ENCODE measurements at regions of chr9 and their contacts with region 1.

Region 1: DNA sequence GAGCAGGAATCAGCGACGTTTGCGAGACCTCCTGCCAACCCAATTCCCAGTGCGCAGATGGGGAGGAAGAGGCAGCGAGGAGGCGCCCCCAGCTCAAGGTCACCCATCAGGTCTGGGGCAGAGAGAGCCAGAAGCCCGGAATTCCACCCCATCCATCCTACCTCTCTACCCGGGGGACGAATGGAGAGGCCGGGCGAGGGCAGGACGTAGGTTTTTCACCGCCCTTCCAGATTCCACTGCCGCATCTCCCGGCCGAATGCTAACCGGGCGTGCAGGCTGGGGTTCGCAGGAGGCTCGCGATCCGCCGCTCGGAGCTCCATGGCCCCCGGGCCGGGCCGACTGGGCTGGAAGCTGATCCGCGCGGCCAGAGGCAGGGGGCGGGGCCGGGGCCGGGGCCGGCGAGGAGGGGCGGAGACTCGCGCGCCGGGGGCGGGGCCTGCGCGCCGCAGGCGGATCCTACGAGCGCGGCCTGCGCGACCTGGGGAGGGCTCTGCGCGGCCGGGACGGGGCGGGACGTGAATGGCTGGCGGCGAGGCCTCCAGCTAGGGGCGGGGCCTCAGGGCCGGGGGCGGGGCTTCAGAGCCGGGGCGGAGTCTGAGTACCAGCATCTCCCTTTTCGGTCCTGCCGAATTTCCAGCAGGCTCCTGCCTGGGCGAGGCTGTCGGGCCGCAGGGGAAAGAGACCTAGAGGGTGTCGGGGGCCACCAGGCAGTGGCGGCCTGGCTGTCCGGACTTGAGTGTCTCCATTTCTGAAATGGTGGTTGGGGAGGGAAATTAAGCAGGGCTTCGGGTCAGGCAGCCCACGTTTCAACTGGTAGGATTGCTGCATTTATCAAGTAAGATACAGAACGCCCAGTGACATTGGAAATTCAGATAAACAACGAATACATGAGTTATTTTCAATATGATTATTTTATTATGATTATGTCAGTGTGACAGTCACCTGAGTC is at the start of gene ST6GALNAC4:
- DNase-seq: peak; percentile 90 to 93 (median 91)
- H3K4me3 ChIP-seq: peak within 1 kb of the TSS; percentile 66 to 76
- H3K4me3 Mint-ChIP-seq: peak within 1 kb of the TSS; percentile 78 to 88 (median 84)
- H3K27ac ChIP-seq: peak within 1 kb of the TSS; percentile 52
- H3K27ac Mint-ChIP-seq: peak within 1 kb of the TSS; percentile 63 to 84 (median 79)
- H3K4me1 ChIP-seq: peaks cover 38% of the 10 kb centered on the region
- H3K4me1 Mint-ChIP-seq: peaks cover 12 to 65% (median 39%) of the 10 kb centered on the region in 4 donors
- H3K27me3 ChIP-seq: no peaks in the 10 kb centered on the region
- H3K27me3 Mint-ChIP-seq: no peaks in the 10 kb centered on the region
- total RNA-seq, gene ST6GALNAC4: 35.7 to 38.1 TPM

Region 2: DNA sequence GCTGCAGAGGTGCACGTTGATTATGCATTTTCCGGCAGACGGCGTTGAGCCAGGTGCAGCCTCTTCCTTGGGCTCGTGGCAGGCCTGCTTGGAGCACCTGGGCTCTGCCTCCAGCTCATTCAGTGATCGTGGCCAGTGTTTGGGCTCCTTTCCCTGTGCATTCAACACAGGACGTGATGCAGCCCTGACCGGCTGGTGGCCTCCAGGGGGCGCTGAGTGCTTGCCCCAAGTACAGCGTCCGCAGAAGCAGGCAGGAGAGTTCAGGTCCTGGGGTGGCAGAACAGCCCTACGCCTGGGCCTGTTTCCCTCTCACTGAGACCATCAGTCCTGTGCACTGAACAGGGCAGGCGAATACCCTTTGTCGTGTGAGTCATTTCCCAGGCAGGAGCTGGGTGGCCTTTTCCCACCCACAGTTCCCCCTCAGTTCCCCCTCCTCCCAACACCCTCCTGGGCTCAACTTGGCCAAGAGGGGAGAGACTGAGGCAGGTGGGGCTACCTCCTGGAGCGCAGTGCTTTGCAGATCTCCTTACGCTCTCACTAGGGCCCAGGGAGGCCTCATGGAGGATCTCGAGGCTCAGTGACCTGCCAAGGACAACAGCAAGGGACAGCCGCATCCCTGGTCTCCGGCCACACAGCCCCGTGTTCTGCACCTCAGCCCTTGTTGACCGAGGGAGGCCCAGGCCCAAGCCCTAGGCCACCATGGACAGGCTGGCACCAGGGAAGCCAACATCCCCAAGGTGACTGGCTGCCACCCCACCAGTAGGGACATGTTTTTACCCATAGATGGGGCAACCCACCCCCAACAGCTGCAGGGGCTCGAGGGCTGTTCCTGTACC is 412.8 kb before region 1 on chr9:
- CTCF ChIA-PET with region 1: interaction called, 6 read pairs
- POLR2A ChIA-PET with region 1: no interaction called
- intact Hi-C with region 1: loop called (anchors 5 kb)
- DNase-seq: peak; percentile 74 to 76 (median 75)
- H3K4me3 ChIP-seq: no peak overlapping the region
- H3K4me3 Mint-ChIP-seq: no peak overlapping the region
- H3K27ac ChIP-seq: no peak overlapping the region
- H3K27ac Mint-ChIP-seq: peak overlapping the region in 4 of 7 donors; percentile 12 to 84 (median 70)
- H3K4me1 ChIP-seq: no peaks in the 10 kb centered on the region
- H3K4me1 Mint-ChIP-seq: peaks cover 0 to 5% (median 2%) of the 10 kb centered on the region in 4 donors
- H3K27me3 ChIP-seq: no peaks in the 10 kb centered on the region
- H3K27me3 Mint-ChIP-seq: no peaks in the 10 kb centered on the region

Region 3: DNA sequence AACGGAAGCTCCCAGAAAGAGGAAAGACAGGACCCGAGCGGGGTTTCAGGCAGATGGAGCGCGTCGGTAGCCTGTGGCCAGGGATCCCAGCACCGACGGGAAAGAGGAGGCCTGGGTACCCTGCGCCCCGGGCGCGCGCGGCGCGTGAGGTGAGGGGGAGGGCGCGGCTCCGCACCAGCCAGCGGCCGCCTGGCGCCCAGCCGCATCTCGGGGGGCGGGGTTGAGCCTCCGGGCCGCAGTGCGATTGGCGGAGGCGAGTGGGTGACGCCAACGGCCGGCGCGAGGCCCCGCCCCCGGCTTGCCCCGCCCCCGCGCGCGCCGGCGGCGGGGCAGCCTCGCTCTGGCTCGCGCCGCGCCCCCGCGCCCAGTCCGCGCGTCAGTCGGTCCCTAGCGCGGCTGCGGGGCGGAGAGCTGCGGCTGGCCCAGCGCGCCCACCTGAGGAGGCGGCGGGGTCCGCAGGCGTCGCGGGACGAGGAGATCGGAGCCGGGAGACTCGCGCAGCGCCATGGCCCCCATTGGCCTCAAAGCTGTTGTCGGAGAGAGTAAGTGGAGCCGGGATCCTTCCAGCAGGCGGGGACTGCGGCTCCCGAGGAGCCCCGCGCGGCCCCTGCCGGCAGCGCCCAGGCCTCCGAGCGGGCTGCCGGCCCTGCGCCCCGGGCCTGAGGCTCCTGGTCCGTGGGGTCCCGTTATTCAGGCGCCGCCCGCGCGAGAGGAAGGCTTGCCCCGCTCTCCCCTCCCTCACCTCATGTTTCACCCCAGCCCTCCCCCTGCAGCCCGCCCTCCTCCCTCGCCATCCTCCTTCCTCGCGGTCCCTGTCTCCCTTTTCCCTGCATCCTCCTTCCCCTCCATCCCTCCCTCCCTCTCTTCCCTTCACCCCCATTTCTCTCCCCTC is 304.8 kb before region 1 on chr9 and contains the start of gene STXBP1:
- CTCF ChIA-PET with region 1: interaction called, 6 read pairs
- POLR2A ChIA-PET with region 1: interaction called, 4 read pairs
- intact Hi-C with region 1: loop called (anchors 5 kb)
- DNase-seq: peak; percentile 81 to 88 (median 85)
- H3K4me3 ChIP-seq: peak within 1 kb of the TSS; percentile 54 to 74
- H3K4me3 Mint-ChIP-seq: peak within 1 kb of the TSS; percentile 88 to 98 (median 96)
- H3K27ac ChIP-seq: peak within 1 kb of the TSS; percentile 24
- H3K27ac Mint-ChIP-seq: peak within 1 kb of the TSS; percentile 59 to 93 (median 87)
- H3K4me1 ChIP-seq: peaks cover 32% of the 10 kb centered on the region
- H3K4me1 Mint-ChIP-seq: peaks cover 23 to 45% (median 32%) of the 10 kb centered on the region in 4 donors
- H3K27me3 ChIP-seq: peaks cover 4% of the 10 kb centered on the region
- H3K27me3 Mint-ChIP-seq: peaks cover 5 to 14% of the 10 kb centered on the region in 2 donors
- total RNA-seq, gene STXBP1: 19.9 to 20.9 TPM

Region 4: DNA sequence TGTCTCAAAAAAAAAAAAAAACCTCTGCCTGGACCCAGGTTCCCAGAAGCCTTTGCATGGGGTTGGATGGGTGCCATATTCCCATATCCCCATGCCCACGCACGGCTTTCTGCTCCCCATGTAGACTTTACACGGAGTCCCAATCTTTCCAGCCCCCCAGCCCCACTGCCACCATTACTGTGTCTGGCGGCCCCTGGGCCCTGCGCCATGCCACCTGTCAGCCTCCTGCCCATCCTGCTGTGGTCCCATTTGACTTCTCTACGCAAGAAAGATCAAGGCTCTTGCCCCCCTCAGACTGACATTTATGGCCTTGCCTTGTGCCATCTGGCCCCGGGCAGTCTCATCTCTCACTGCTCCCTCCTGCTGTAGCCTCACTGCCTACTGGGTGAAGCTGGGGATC is 33.0 kb before region 1 on chr9:
- CTCF ChIA-PET with region 1: interaction called, 12 read pairs
- POLR2A ChIA-PET with region 1: interaction called, 3 read pairs
- intact Hi-C with region 1: no loop called
- DNase-seq: no peak
- H3K4me3 ChIP-seq: no peak overlapping the region
- H3K4me3 Mint-ChIP-seq: no peak overlapping the region
- H3K27ac ChIP-seq: no peak overlapping the region
- H3K27ac Mint-ChIP-seq: peak overlapping the region in 5 of 7 donors; percentile 19 to 72 (median 52)
- H3K4me1 ChIP-seq: no peaks in the 10 kb centered on the region
- H3K4me1 Mint-ChIP-seq: peaks cover 0 to 16% (median 9%) of the 10 kb centered on the region in 4 donors
- H3K27me3 ChIP-seq: no peaks in the 10 kb centered on the region
- H3K27me3 Mint-ChIP-seq: no peaks in the 10 kb centered on the region

Region 5: GRCh38 chr9:127905004-127905728 is 11.8 kb before region 1 on chr9:
- CTCF ChIA-PET with region 1: interaction called, 10 read pairs
- POLR2A ChIA-PET with region 1: interaction called, 87 read pairs
- intact Hi-C with region 1: loop called (anchors 1 kb)
- DNase-seq: peak; percentile 59 to 89 (median 61)
- H3K4me3 ChIP-seq: peak overlapping the region; percentile 82 to 85
- H3K4me3 Mint-ChIP-seq: peak overlapping the region; percentile 86 to 99 (median 95)
- H3K27ac ChIP-seq: peak overlapping the region; percentile 100
- H3K27ac Mint-ChIP-seq: peak overlapping the region; percentile 98 to 100 (median 100)
- H3K4me1 ChIP-seq: peaks cover 67% of the 10 kb centered on the region
- H3K4me1 Mint-ChIP-seq: peaks cover 16 to 60% (median 31%) of the 10 kb centered on the region in 4 donors
- H3K27me3 ChIP-seq: no peaks in the 10 kb centered on the region
- H3K27me3 Mint-ChIP-seq: no peaks in the 10 kb centered on the region

Region 6: DNA sequence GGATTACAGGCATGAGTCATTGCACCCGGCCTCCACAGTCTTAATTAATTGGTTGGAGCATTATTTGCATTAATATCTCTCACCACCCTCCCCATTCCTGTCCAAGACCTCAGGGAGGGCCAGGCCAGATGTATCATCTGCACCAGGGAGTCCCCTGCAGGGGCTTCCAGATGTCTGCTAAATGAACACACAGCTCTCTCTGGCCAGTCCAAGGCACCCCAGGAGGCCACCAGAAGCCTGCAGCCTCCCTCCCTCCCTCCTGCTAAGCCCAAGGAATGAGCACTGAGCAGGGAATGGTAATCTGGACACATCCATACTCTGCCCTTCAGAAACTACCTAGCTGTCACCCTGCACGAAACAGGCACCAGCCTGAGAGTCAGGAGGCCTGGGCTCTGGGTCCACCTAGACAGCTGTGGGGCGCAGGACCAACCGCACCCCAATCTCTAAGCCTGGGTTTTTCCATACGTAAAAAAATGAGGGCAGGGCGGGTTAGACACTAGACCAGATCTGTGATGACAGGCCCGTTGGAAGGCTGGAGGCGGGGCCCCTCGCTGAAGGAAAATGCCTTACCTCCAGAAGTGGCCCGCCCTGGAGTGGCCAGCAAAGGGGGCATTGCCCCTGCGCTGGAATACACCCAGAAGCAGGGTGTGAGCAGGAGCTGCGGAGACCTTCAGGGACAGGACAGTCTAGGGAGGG is 266.1 kb after region 1 on chr9:
- CTCF ChIA-PET with region 1: no interaction called
- POLR2A ChIA-PET with region 1: no interaction called
- intact Hi-C with region 1: no loop called
- DNase-seq: no peak
- H3K4me3 ChIP-seq: no peak overlapping the region
- H3K4me3 Mint-ChIP-seq: no peak overlapping the region
- H3K27ac ChIP-seq: no peak overlapping the region
- H3K27ac Mint-ChIP-seq: peak overlapping the region in 1 of 7 donors; percentile 81
- H3K4me1 ChIP-seq: peaks cover 7% of the 10 kb centered on the region
- H3K4me1 Mint-ChIP-seq: peaks cover 3 to 11% (median 5%) of the 10 kb centered on the region in 4 donors
- H3K27me3 ChIP-seq: no peaks in the 10 kb centered on the region
- H3K27me3 Mint-ChIP-seq: no peaks in the 10 kb centered on the region